ENCODE measurements at regions of chr5 and their contacts with region 1.

Region 1: DNA sequence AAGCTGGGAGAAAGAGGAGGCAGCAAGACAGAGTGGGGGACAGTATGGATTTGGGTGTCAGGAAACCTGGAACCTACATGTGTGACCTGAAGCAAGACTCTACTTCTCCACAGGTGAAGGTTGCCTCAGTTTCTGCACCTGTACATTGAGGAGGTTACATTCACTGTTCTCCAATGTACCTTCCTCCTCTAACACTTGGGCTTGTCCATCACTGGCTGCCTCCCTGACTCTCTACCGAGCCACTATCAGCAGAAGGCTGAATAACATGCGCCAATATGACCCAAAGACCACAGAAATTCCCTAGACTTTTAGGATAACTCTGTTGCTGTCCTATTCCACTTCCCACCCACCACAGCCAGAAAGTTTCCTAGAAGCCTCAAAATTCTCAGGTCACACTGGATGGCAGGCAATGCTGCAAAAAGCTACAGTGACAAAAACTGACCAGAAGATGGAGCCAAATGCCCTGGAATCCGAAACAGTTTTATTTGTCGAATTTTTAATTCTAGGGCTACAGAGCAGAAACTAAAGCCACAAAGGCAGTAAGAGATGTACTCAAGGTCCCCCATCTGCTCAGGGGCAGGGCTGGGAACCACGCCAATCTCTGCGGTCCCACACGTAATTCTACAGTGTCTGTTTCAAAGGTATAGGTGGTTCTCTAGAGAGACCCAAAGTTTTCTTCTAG is 64.4 kb downstream of the FAM114A2 start:
- DNase-seq: peak; percentile 53
- H3K4me3 ChIP-seq: no peak overlapping the region
- H3K27ac ChIP-seq: no peak overlapping the region
- H3K4me1 ChIP-seq: no peaks in the 10 kb centered on the region
- H3K27me3 ChIP-seq: peaks cover 5 to 15% of the 10 kb centered on the region in 2 experiments
- CTCF ChIP-seq: peak; percentile 65 to 74
- POLR2A ChIP-seq: no peak

Region 2: GRCh38 chr5:153985498-153985897 is 11.2 kb after region 1 on chr5:
- CTCF ChIA-PET with region 1: interaction called, 11 read pairs
- POLR2A ChIA-PET with region 1: no interaction called
- dilution Hi-C with region 1: no loop called
- intact Hi-C with region 1: no loop called
- DNase-seq: no peak
- H3K4me3 ChIP-seq: no peak overlapping the region
- H3K27ac ChIP-seq: no peak overlapping the region
- H3K4me1 ChIP-seq: no peaks in the 10 kb centered on the region
- H3K27me3 ChIP-seq: peaks cover 0 to 3% of the 10 kb centered on the region in 2 experiments
- CTCF ChIP-seq: no peak
- POLR2A ChIP-seq: no peak

Region 3: DNA sequence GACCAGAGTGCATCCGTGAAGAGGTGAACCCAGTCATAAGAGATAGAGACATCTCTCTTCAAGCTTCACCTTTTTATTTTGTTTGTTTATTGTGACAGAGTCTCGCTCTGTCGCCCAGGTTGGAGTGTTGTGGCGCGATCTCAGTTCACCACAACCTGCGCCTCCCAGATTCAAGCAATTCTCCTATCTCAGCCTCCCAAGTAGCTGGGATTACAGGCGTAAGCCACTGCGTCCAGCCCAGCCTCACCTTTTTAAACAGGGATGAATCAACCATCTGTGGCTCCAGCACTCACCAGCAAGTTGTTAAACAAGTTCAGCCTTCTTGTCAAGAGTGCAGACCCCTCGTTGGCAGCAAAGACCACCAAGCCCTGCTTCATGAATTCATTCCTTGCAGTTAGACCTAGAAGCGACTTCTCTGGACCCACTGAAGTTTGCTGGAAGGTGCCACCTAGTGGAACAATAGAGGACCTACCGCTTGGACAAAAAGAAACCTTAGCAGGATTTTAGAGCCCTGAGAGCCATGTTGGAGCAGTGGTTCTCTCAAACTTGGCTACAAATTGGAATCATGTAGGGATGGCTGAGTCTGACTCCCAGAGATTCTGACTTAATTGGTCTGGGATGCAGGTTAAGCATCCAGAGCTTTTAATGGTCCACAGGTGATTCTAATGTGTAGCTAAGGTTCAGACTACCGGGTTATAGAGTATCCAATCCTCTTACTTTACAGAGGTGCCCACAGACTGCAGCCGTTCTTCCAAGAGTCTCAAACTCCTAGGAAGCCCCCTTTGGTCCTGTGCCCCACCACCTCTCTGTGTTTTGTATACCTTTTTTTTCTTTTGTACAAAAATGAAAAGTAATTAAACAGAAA is 205.8 kb after region 1 on chr5:
- CTCF ChIA-PET with region 1: interaction called, 56 read pairs
- POLR2A ChIA-PET with region 1: no interaction called
- dilution Hi-C with region 1: no loop called
- intact Hi-C with region 1: loop called (anchors 1 kb)
- DNase-seq: peak; percentile 64
- H3K4me3 ChIP-seq: no peak overlapping the region
- H3K27ac ChIP-seq: no peak overlapping the region
- H3K4me1 ChIP-seq: peaks cover 9% of the 10 kb centered on the region
- H3K27me3 ChIP-seq: peaks cover 15 to 24% of the 10 kb centered on the region in 2 experiments
- CTCF ChIP-seq: peak; percentile 76 to 80
- POLR2A ChIP-seq: no peak

Region 4: GRCh38 chr5:154196955-154197652 is 222.8 kb after region 1 on chr5:
- CTCF ChIA-PET with region 1: interaction called, 14 read pairs
- POLR2A ChIA-PET with region 1: no interaction called
- dilution Hi-C with region 1: no loop called
- intact Hi-C with region 1: no loop called
- DNase-seq: peak; percentile 81
- H3K4me3 ChIP-seq: no peak overlapping the region
- H3K27ac ChIP-seq: peak overlapping the region; percentile 12
- H3K4me1 ChIP-seq: peaks cover 43% of the 10 kb centered on the region
- H3K27me3 ChIP-seq: no peaks in the 10 kb centered on the region
- CTCF ChIP-seq: peak in 1 of 2 donors; percentile 26
- POLR2A ChIP-seq: no peak

Region 5: GRCh38 chr5:154421868-154422267 is 447.6 kb after region 1 on chr5:
- CTCF ChIA-PET with region 1: interaction called, 11 read pairs
- POLR2A ChIA-PET with region 1: no interaction called
- dilution Hi-C with region 1: no loop called
- intact Hi-C with region 1: no loop called
- DNase-seq: peak; percentile 33
- H3K4me3 ChIP-seq: no peak overlapping the region
- H3K27ac ChIP-seq: no peak overlapping the region
- H3K4me1 ChIP-seq: no peaks in the 10 kb centered on the region
- H3K27me3 ChIP-seq: no peaks in the 10 kb centered on the region
- CTCF ChIP-seq: peak; percentile 56 to 62
- POLR2A ChIP-seq: no peak

Region 6: DNA sequence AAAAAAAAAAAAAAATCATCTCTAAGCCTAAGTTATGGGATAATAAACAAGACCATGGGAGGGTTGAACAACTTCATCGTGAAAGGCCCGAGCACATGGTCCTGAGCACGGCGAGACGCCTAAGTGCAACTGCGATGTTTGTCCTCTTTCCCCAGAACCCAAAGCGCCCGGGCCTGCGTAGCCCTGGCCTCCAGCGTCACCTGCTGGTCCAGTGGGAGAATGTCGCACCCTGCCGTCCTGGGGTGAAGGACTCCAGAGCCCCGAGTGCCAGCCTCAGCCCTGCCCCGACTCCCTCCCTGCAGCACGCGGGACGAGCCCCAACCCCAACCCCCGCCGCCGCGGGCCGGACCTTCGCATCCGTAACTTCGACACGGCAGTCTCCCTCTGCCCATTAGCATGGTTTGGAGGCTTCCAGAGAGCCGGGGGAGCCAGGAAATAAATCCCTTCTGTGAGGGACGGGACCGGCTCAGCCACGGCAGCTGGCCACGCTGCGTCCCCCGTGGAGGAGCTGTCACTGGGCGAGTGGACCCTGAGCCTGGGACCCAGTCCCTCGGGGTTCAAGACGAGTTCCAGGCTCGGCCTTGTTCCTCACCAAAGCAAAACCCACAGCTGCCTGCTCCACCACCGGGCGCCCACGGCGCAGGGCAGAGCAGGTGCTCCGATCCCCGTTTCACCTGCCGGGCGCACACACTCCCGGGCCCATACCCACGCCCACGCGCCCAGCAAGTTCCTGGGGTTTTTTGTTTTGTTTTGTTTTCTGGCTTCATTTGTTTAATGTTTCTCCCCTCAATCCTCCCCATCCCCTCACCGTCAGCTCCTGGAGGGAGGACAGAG is 636.3 kb after region 1 on chr5:
- CTCF ChIA-PET with region 1: interaction called, 22 read pairs
- POLR2A ChIA-PET with region 1: no interaction called
- dilution Hi-C with region 1: no loop called
- intact Hi-C with region 1: loop called (anchors 2 kb)
- DNase-seq: peak; percentile 62
- H3K4me3 ChIP-seq: peak overlapping the region in 2 of 3 experiments; percentile 19 to 20
- H3K27ac ChIP-seq: no peak overlapping the region
- H3K4me1 ChIP-seq: peaks cover 4% of the 10 kb centered on the region
- H3K27me3 ChIP-seq: peaks cover 22 to 39% of the 10 kb centered on the region in 2 experiments
- CTCF ChIP-seq: peak; percentile 83 to 91
- POLR2A ChIP-seq: no peak

Region 7: DNA sequence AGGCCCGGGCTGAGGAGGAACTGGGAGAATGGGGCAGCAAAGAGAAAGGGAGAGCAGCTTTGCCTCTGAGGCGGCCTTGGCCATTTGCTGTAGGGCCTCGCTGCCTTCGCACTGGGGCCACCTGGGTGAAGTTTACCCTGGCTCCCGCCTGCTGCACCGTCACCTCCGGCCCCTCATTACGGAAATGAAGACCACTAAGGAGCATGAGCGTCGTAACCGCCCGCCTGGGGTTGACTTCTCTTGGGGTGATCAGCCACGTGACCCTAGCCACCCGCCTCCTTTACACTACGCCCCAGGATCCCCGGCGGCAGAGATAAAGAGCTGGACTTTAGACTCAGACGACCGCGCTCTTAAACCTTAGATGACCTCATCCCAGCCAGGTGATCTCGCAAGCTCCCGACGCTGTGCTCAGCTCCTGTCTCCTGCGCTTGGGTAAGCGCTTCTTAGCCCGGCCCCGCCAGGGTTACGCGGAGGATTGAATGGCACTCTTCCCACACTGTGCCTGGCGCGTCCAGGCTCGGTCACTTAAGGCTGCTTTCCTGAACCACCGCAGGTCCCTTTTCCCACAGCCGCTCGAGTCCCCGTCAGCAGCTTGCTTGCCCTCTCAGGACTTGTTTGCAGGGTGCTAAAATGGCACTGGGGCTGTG is 673.0 kb after region 1 on chr5:
- CTCF ChIA-PET with region 1: interaction called, 11 read pairs
- POLR2A ChIA-PET with region 1: no interaction called
- dilution Hi-C with region 1: no loop called
- intact Hi-C with region 1: no loop called
- DNase-seq: peak; percentile 19
- H3K4me3 ChIP-seq: peak overlapping the region; percentile 1 to 28 (median 9)
- H3K27ac ChIP-seq: no peak overlapping the region
- H3K4me1 ChIP-seq: peaks cover 6% of the 10 kb centered on the region
- H3K27me3 ChIP-seq: no peaks in the 10 kb centered on the region
- CTCF ChIP-seq: no peak
- POLR2A ChIP-seq: no peak

Region 8: DNA sequence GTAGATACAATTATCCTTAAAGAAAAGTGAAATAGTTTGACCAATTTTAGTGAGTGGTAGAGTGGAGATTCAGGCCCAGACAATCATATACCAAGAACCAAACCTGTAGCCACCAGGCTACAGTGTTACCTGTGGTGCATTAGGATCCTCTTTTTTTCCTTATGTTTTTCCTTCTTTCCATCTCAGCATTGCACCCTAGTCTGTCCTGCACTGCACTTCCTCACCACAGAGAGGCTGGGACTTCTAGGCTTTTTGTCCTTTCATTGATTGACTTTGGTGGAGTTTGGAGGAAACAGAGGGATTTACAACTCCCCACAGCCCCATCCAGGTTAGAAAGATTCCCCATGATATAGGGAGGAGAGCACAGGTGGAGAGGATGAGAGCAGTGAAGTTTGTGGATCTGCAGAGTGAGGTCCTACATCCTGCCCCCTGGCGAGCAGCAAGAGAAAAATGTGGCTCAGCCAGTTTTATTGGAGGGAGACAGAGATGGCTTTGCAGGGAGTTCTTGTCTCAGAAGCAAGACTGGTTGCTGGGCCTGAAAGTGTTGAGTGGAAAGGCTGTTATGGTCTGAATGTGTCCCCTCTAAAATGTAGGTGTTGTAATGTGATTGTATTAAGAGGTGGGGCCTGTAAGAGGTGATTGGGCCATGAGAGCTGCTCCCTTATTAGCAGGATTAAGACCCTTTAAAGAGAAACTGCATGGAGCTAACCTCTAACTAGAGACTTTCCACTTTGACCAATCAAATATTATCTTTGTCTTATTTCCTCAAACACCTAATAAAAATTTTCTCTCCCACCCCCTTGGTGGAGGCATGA is 1075.5 kb after region 1 on chr5:
- CTCF ChIA-PET with region 1: no interaction called
- POLR2A ChIA-PET with region 1: no interaction called
- dilution Hi-C with region 1: no loop called
- intact Hi-C with region 1: no loop called
- DNase-seq: peak; percentile 32
- H3K4me3 ChIP-seq: no peak overlapping the region
- H3K27ac ChIP-seq: no peak overlapping the region
- H3K4me1 ChIP-seq: no peaks in the 10 kb centered on the region
- H3K27me3 ChIP-seq: no peaks in the 10 kb centered on the region
- CTCF ChIP-seq: peak; percentile 26 to 34
- POLR2A ChIP-seq: no peak

Measured in endothelial cell of umbilical vein (primary cell).